ENCODE measurements at regions of chr4 and their contacts with region 1.

Region 1: GRCh38 chr4:5988086-5988845 is 30.0 kb downstream of the C4orf50 start:
- DNase-seq: no peak
- ATAC-seq: no peak
- H3K4me3 ChIP-seq: no peak overlapping the region
- H3K4me3 Mint-ChIP-seq: no peak overlapping the region
- H3K27ac ChIP-seq: no peak overlapping the region
- H3K27ac Mint-ChIP-seq: no peak overlapping the region
- H3K4me1 ChIP-seq: no peaks in the 10 kb centered on the region
- H3K4me1 Mint-ChIP-seq: no peaks in the 10 kb centered on the region
- H3K27me3 ChIP-seq: no peaks in the 10 kb centered on the region
- H3K27me3 Mint-ChIP-seq: peaks cover 3% of the 10 kb centered on the region
- CTCF ChIP-seq: no peak

Region 2: GRCh38 chr4:5998333-5998936 is 10.2 kb after region 1 on chr4:
- CTCF ChIA-PET with region 1: interaction called, 19 read pairs
- POLR2A ChIA-PET with region 1: no interaction called
- intact Hi-C with region 1: no loop called
- DNase-seq: peak in 7 of 9 experiments; percentile 19 to 65 (median 39)
- ATAC-seq: peak; percentile 36
- H3K4me3 ChIP-seq: no peak overlapping the region
- H3K4me3 Mint-ChIP-seq: no peak overlapping the region
- H3K27ac ChIP-seq: no peak overlapping the region
- H3K27ac Mint-ChIP-seq: no peak overlapping the region
- H3K4me1 ChIP-seq: no peaks in the 10 kb centered on the region
- H3K4me1 Mint-ChIP-seq: no peaks in the 10 kb centered on the region
- H3K27me3 ChIP-seq: peaks cover 0 to 3% of the 10 kb centered on the region in 2 experiments
- H3K27me3 Mint-ChIP-seq: peaks cover 21% of the 10 kb centered on the region
- CTCF ChIP-seq: peak; percentile 69

Measured in CD8-positive, alpha-beta T cell (primary cell).